PC-3 (cell line): ENCODE measurements at regions of chr6 and their contacts with region 1.

Region 1: DNA sequence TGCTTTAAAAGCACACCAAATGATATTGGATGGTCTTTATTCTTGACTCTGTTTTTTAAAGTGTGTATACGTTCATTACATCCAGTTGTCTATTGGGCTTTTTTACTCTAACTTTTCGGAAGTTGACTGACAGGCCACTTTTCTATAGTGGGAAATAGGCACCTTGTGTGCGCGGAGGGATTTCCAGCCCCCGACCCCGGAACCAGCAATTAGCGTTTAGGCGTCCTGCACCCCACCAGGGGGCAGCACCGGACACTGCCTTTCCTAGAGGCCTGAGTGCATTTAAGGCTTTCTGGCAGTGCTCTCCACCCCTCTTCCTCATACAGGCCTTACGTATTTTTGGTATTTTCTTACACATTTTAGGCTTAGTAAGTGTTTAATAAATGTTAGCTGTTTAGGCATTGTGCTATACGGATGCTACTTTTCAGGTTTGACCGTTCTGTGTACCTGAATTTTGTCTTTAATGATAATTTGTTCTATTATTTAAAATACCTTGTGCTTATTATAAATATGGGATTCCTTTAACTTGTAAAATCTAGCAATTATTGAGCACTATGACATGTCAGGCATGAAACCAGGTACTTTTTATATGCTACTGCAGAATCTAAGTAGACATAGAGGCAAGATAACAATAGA is 231.8 kb downstream of the BCKDHB start:
- DNase-seq: peak; percentile 70
- ATAC-seq: peak; percentile 49; the same call in 1 of the 2 replicates
- H3K4me3 ChIP-seq: no peak overlapping the region
- H3K27ac ChIP-seq: no peak overlapping the region
- H3K4me1 ChIP-seq: no peaks in the 10 kb centered on the region
- H3K27me3 ChIP-seq: no peaks in the 10 kb centered on the region
- CTCF ChIP-seq: peak; percentile 86

Region 2: DNA sequence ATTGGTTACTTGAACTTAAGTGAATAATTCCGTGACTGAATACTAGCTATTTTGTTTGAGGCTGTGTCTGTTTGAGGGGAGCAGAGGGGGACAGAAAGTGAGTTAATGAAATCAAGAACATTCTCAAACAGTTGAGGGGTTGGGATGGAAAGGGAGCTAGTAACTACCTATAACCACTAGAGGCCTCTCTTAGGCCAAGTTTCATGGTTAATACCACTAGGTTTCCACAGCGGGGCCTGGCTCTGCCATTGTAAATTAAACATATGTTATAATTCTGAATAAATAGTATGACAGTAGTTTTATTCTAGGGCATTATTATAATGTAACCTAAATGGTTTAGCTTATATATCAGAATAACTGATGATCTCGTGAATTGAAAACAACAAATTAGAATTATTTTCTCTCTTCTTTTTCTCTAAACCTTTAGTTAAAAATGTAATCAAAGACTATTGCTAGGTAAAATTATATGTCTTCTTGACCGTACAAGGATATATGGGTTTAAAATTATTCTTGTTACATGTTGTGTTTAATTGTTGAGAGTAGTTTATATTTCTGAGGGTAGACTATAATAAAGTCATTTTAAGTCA is 123.8 kb before region 1 on chr6:
- CTCF ChIA-PET with region 1: no interaction called
- POLR2A ChIA-PET with region 1: no interaction called
- intact Hi-C with region 1: loop called (anchors 5 kb)
- DNase-seq: peak; percentile 67
- ATAC-seq: peak; percentile 86
- H3K4me3 ChIP-seq: no peak overlapping the region
- H3K27ac ChIP-seq: no peak overlapping the region
- H3K4me1 ChIP-seq: 0 out of 2 replicates have a peak, but pooled peaks cover 2% of the 10 kb centered on the region
- H3K27me3 ChIP-seq: no peaks in the 10 kb centered on the region
- CTCF ChIP-seq: peak; percentile 70

Region 3: GRCh38 chr6:80402266-80402665 is 63.9 kb after region 1 on chr6:
- CTCF ChIA-PET with region 1: no interaction called
- POLR2A ChIA-PET with region 1: no interaction called
- intact Hi-C with region 1: no loop called
- DNase-seq: peak; percentile 17
- ATAC-seq: no peak
- H3K4me3 ChIP-seq: no peak overlapping the region
- H3K27ac ChIP-seq: no peak overlapping the region
- H3K4me1 ChIP-seq: peaks cover 8% of the 10 kb centered on the region
- H3K27me3 ChIP-seq: no peaks in the 10 kb centered on the region
- CTCF ChIP-seq: no peak

Region 4: DNA sequence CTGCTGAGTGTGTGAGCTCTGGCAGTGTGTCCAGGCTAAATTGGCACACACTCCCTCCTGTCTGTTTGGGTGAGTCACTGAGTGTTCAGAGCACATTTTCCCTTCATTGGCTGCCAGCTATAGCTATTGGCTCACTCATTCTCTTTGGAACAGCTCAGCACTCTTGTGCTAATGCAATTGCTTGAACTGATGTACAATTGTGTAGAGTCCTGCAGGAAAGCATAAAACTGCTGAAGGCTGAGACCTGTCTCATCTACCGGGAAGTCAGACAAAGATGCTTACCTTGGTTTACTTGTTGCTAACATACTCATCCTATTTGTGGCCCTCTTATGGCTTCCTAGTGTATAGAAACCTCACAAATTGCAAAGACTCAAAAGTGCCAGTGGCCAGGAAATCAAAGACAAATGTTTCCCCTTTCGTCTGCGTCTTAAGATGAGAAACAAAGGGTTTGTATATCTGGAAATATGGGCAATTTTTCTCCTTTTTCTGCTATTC is 119.2 kb after region 1 on chr6:
- CTCF ChIA-PET with region 1: no interaction called
- POLR2A ChIA-PET with region 1: no interaction called
- intact Hi-C with region 1: loop called (anchors 5 kb)
- DNase-seq: peak; percentile 90
- ATAC-seq: peak; percentile 81
- H3K4me3 ChIP-seq: no peak overlapping the region
- H3K27ac ChIP-seq: peak overlapping the region; percentile 63
- H3K4me1 ChIP-seq: peaks cover 49% of the 10 kb centered on the region
- H3K27me3 ChIP-seq: no peaks in the 10 kb centered on the region
- CTCF ChIP-seq: no peak

Region 5: GRCh38 chr6:80477591-80477990 is 139.3 kb after region 1 on chr6:
- CTCF ChIA-PET with region 1: no interaction called
- POLR2A ChIA-PET with region 1: no interaction called
- intact Hi-C with region 1: loop called (anchors 5 kb)
- DNase-seq: no peak
- ATAC-seq: no peak
- H3K4me3 ChIP-seq: no peak overlapping the region
- H3K27ac ChIP-seq: no peak overlapping the region
- H3K4me1 ChIP-seq: 0 out of 2 replicates have a peak, but pooled peaks cover 4% of the 10 kb centered on the region
- H3K27me3 ChIP-seq: no peaks in the 10 kb centered on the region
- CTCF ChIP-seq: no peak

Region 6: GRCh38 chr6:80541181-80541580 is 202.9 kb after region 1 on chr6:
- CTCF ChIA-PET with region 1: no interaction called
- POLR2A ChIA-PET with region 1: no interaction called
- intact Hi-C with region 1: loop called (anchors 5 kb)
- DNase-seq: peak; percentile 89
- ATAC-seq: peak; percentile 85
- H3K4me3 ChIP-seq: peak overlapping the region; percentile 35; the same call in 1 of the 2 replicates
- H3K27ac ChIP-seq: peak overlapping the region; percentile 99
- H3K4me1 ChIP-seq: peaks cover 38% of the 10 kb centered on the region
- H3K27me3 ChIP-seq: no peaks in the 10 kb centered on the region
- CTCF ChIP-seq: no peak

Region 7: DNA sequence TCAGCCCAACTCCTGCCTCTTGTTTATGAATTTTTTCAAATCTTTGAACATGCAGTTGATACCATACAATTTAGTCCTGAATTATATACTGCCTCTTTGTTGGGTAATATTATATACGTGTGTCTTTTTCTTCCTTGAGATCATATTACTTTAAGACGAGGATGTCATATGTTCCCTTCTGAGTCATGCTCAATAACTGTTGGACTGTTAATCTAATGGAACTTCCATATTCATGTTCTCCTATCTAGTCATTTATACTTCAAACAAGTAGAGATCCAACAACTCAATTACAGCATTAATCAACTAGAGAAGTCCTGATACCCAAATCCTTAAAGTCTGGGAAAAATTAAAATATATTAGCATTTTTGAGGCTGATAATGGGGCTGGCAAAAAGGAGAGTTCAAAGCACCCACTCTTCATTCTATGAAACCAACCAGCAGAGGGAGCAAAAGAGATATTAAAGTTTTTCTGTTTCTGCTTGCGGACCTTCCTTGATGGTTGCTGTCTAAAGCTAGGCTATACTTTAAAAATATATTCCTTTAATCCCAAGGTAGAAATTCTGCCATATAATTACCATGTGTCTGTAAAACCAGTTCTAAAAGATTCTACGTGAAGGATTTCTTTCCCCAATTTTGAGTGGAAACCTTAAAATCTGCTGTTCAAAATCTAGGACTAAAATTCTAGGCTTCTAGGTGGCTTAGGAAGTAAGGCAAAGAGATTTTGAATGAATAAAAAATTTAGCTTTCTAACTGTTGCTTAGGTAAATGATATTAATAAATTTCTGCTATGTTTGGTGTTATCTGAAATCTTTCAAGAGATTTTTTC is 267.1 kb after region 1 on chr6:
- CTCF ChIA-PET with region 1: no interaction called
- POLR2A ChIA-PET with region 1: no interaction called
- intact Hi-C with region 1: loop called (anchors 2 kb)
- DNase-seq: peak; percentile 58
- ATAC-seq: peak; percentile 48
- H3K4me3 ChIP-seq: no peak overlapping the region
- H3K27ac ChIP-seq: 0 out of 2 replicates have a peak overlapping the region, but pooled peaks have one; percentile 11
- H3K4me1 ChIP-seq: peaks cover 32% of the 10 kb centered on the region
- H3K27me3 ChIP-seq: no peaks in the 10 kb centered on the region
- CTCF ChIP-seq: peak; percentile 79

Region 8: GRCh38 chr6:80725156-80725930 is 387.0 kb after region 1 on chr6:
- CTCF ChIA-PET with region 1: no interaction called
- POLR2A ChIA-PET with region 1: no interaction called
- intact Hi-C with region 1: loop called (anchors 1 kb)
- DNase-seq: peak; percentile 39
- ATAC-seq: peak; percentile 88
- H3K4me3 ChIP-seq: no peak overlapping the region
- H3K27ac ChIP-seq: no peak overlapping the region
- H3K4me1 ChIP-seq: peaks cover 8% of the 10 kb centered on the region; the same call in 1 of the 2 replicates
- H3K27me3 ChIP-seq: no peaks in the 10 kb centered on the region
- CTCF ChIP-seq: no peak